ENCODE measurements at regions of chr4 and their contacts with region 1.

Region 1: GRCh38 chr4:99054428-99054994 is 34.1 kb downstream of the ADH5 start:
- DNase-seq: no peak
- ATAC-seq: no peak
- H3K4me3 ChIP-seq: no peak overlapping the region
- H3K27ac ChIP-seq: no peak overlapping the region
- H3K4me1 ChIP-seq: no peaks in the 10 kb centered on the region
- H3K27me3 ChIP-seq: no peaks in the 10 kb centered on the region
- CTCF ChIP-seq: no peak
- POLR2A ChIP-seq: no peak

Region 2: GRCh38 chr4:99002279-99002678 is 52.2 kb before region 1 on chr4:
- in situ Hi-C with region 1: loop called (anchors 5 to 10 kb)
- intact Hi-C with region 1: no loop called
- DNase-seq: no peak
- ATAC-seq: no peak
- H3K4me3 ChIP-seq: no peak overlapping the region
- H3K27ac ChIP-seq: no peak overlapping the region
- H3K4me1 ChIP-seq: peaks cover 2 to 7% of the 10 kb centered on the region in 2 donors
- H3K27me3 ChIP-seq: no peaks in the 10 kb centered on the region
- CTCF ChIP-seq: no peak
- POLR2A ChIP-seq: no peak

Region 3: GRCh38 chr4:99144070-99144469 is 89.6 kb after region 1 on chr4 and contains the start of gene ADH4:
- in situ Hi-C with region 1: no loop called
- intact Hi-C with region 1: no loop called
- DNase-seq: peak in 1 of 2 donors; percentile 19
- ATAC-seq: peak in 1 of 2 donors; percentile 41
- H3K4me3 ChIP-seq: no peak within 1 kb of the TSS
- H3K27ac ChIP-seq: peak within 1 kb of the TSS in 1 of 4 donors; percentile 11
- H3K4me1 ChIP-seq: no peaks in the 10 kb centered on the region
- H3K27me3 ChIP-seq: no peaks in the 10 kb centered on the region
- CTCF ChIP-seq: no peak
- POLR2A ChIP-seq: no peak
- total RNA-seq, gene ADH4: 0.75 to 1.0 (median 1.00) TPM in 3 of 4 donors, not detected in the other